ENCODE measurements at regions of chrX and their contacts with region 1.

Region 1: GRCh38 chrX:13750204-13750603 is 15.7 kb downstream of the OFD1 start:
- DNase-seq: no peak
- H3K4me3 ChIP-seq: no peak overlapping the region
- CTCF ChIP-seq: peak; percentile 18

Region 2: DNA sequence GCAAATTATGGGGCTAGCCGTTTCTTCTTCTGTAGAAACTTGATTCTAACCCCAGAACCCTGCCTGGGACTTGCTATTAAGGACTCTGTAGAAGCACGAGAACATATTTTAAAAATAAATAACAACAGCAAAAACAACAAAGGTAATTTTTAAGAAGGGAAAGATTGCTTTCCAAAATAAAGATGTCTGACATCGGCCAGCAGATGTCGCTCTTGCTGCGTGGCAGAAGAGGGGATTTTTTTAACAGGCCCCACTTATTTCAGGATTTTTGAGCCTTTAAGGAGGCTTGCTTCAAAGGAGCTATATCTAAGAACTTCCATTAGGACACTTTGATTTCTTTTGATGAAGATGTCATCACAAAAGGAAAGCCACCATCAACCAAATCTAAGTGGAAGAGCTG is 243.6 kb before region 1 on chrX:
- CTCF ChIA-PET with region 1: interaction called, 25 read pairs
- POLR2A ChIA-PET with region 1: no interaction called
- DNase-seq: no peak
- H3K4me3 ChIP-seq: no peak overlapping the region
- CTCF ChIP-seq: peak; percentile 20

Region 3: GRCh38 chrX:13734278-13735172 is 15.7 kb before region 1 on chrX and contains the starts of genes OFD1 and TRAPPC2:
- CTCF ChIA-PET with region 1: interaction called, 30 read pairs
- POLR2A ChIA-PET with region 1: interaction called, 6 read pairs
- DNase-seq: peak; percentile 67
- H3K4me3 ChIP-seq: peak within 1 kb of the TSS; percentile 76
- CTCF ChIP-seq: no peak

Region 4: DNA sequence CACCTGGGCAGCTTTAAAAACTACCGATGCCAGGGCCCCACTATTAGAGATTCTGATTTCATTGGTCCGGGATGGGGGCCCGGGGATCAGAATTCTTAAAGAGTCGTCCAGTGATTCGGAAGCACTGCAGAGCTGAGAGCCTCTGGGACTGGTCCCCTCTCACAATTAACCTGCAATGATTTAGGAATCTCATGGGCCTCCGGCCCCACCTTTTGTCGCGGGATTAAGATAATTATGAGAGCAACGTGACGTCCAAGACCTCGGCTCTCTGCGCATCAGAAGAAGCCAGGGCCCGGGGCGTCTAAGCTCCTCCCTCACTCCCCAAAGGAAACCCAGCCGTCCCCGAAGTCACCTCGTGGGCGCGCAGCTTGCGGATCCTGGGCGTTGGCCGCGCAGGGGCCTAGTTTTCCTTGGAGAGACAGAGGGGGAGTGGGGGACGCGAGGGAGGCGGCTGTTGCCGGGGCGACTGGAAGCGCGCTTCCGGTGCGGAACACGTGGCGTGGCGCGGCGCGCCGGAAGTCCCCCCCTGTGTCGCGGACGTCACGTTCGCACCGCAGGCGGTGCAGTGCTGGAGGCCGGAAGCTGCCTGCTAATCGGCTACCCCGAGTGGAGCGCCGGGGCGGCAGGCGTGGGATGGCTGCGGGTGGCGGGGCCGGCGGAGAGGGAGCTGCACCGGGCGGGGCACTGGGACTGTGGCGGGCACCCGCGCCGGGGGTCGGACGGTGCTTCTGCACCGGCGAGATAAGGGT is 279.4 kb after region 1 on chrX and contains the start of gene GEMIN8:
- CTCF ChIA-PET with region 1: interaction called, 15 read pairs
- POLR2A ChIA-PET with region 1: no interaction called
- DNase-seq: peak; percentile 36
- H3K4me3 ChIP-seq: peak within 1 kb of the TSS; percentile 65
- CTCF ChIP-seq: no peak

Region 5: DNA sequence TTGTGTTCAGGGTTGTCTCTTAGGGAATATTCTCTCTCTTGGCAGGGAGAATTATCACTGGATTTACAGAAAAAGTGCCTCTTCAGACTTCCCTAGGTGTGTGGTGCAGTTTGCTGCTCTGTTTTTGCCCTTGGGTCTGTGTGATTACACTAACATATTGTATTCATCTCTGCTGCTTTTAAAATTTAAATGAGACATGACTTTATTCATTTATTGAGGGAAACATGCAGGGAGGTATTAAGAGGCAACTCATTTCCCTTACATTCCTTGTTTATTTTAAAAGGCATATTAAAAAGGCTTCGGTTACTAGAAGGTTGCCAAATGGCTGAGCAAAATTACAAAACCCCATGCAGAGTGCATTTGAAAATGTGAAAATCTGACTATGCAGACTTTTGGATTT is 414.6 kb after region 1 on chrX:
- CTCF ChIA-PET with region 1: no interaction called
- POLR2A ChIA-PET with region 1: no interaction called
- DNase-seq: no peak
- H3K4me3 ChIP-seq: no peak overlapping the region
- CTCF ChIP-seq: no peak

Measured in AG04449 (cell line).